HepG2 (cell line): ENCODE measurements at regions of chr13 and their contacts with region 1.

Region 1: GRCh38 chr13:112443995-112444860 is 68.1 kb downstream of the SPACA7 start:
- DNase-seq: peak; percentile 44
- ATAC-seq: peak; percentile 92
- H3K4me3 ChIP-seq: no peak overlapping the region
- H3K27ac ChIP-seq: no peak overlapping the region
- H3K4me1 ChIP-seq: no peaks in the 10 kb centered on the region
- H3K27me3 ChIP-seq: peaks cover 10 to 84% of the 10 kb centered on the region in 2 experiments
- CTCF ChIP-seq: peak; percentile 96
- EP300 ChIP-seq: no peak
- POLR2A ChIP-seq: no peak
- RAD21 ChIP-seq: peak; percentile 94

Region 2: GRCh38 chr13:111474136-111475002 is 969.9 kb before region 1 on chr13:
- CTCF ChIA-PET with region 1: interaction called, 32 read pairs
- POLR2A ChIA-PET with region 1: no interaction called
- in situ Hi-C with region 1: loop called (anchors 5 kb)
- intact Hi-C with region 1: no loop called
- DNase-seq: peak; percentile 18
- ATAC-seq: peak; percentile 83
- H3K4me3 ChIP-seq: no peak overlapping the region
- H3K27ac ChIP-seq: no peak overlapping the region
- H3K4me1 ChIP-seq: no peaks in the 10 kb centered on the region
- H3K27me3 ChIP-seq: peaks cover 8 to 48% of the 10 kb centered on the region in 2 experiments
- CTCF ChIP-seq: peak; percentile 68
- EP300 ChIP-seq: no peak
- POLR2A ChIP-seq: no peak
- RAD21 ChIP-seq: 0 out of 2 replicates have a peak, but pooled peaks have one; percentile 23

Region 3: GRCh38 chr13:112213467-112214225 is 230.6 kb before region 1 on chr13:
- CTCF ChIA-PET with region 1: no interaction called
- POLR2A ChIA-PET with region 1: no interaction called
- in situ Hi-C with region 1: loop called (anchors 25 kb)
- intact Hi-C with region 1: no loop called
- DNase-seq: peak; percentile 28
- ATAC-seq: peak; percentile 77
- H3K4me3 ChIP-seq: no peak overlapping the region
- H3K27ac ChIP-seq: no peak overlapping the region
- H3K4me1 ChIP-seq: no peaks in the 10 kb centered on the region
- H3K27me3 ChIP-seq: peaks cover 3 to 26% of the 10 kb centered on the region in 2 experiments; a peak in 4 of 5 replicates
- CTCF ChIP-seq: peak; percentile 21
- EP300 ChIP-seq: no peak
- POLR2A ChIP-seq: no peak
- RAD21 ChIP-seq: no peak

Region 4: DNA sequence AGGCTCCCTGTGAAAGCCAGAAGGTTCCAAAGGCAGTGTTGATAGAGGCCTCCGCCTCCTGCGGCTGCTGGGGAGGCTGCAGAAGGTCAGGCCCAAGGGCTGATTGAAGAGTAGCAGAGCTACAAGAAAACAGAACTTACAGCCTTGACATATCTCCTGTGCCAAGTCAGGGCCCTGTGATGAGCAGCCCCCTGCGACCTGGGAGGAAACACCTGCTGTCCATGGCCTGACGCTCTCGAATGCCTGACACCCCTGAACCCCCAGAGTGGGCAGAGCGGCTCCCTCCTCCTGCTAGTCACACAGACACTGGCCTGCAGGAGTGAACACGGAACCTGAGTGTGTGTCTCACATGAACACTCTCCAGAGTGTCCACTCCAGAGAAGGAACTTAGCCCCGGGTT is 181.9 kb after region 1 on chr13:
- CTCF ChIA-PET with region 1: no interaction called
- POLR2A ChIA-PET with region 1: no interaction called
- in situ Hi-C with region 1: no loop called
- intact Hi-C with region 1: no loop called
- DNase-seq: no peak
- ATAC-seq: no peak; the same call in 2 of the 3 replicates
- H3K4me3 ChIP-seq: no peak overlapping the region
- H3K27ac ChIP-seq: no peak overlapping the region
- H3K4me1 ChIP-seq: no peaks in the 10 kb centered on the region
- H3K27me3 ChIP-seq: peaks cover 6 to 51% of the 10 kb centered on the region in 2 experiments; a peak in 4 of 5 replicates
- CTCF ChIP-seq: no peak
- EP300 ChIP-seq: no peak
- POLR2A ChIP-seq: no peak
- RAD21 ChIP-seq: no peak